Thyroid gland (tissue), 4 donors: ENCODE measurements at regions of chr6 and their contacts with region 1.

Region 1: DNA sequence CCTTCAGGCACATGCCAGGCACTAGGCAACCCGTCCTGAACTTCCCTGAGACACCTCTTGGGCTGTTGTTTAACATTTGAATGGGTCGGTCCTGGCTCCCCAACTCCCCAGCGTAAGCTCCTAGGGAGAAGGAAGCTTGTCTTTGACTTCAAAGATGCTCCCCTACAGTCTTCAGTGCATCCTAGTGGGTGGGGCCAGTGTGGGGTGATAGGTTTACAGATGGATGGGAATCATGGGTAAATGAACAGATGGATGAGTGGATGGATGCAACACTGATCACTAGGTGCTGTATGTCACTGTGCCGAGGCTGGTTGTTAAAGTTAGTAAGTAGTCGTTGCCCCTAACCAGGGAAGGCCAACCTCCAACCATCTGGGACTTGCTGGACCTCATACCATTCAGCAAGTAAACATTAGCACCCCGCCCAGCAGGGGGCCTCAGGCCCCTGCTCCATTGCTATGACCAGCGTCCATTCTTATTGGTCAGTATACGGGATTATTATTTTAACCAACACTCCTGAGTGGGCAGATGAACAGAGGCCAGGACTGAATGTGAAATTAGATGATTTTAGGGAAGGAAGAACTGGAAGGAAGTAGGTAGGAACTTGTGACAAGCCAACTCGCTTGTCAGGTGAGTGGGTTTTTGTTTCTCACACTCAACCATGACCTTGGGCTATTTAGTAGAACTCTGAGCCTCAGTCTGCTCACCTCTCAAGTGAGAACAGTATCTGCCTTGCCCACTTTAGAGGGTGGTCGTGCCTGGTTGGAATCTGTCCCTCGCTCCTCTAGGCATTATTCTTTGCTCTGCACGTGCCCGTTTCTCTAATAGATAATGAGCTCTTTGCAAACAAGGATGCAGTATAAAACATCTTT is 82.9 kb upstream of the FOXP4 start:
- DNase-seq: peak; percentile 92
- H3K4me3 ChIP-seq: no peak overlapping the region
- H3K27ac ChIP-seq: no peak overlapping the region
- H3K4me1 ChIP-seq: peaks cover 0 to 4% of the 10 kb centered on the region in 2 donors
- H3K27me3 ChIP-seq: no peaks in the 10 kb centered on the region
- CTCF ChIP-seq: peak; percentile 41 to 90 (median 80)
- POLR2A ChIP-seq: peak in 1 of 2 donors; percentile 19

Region 2: DNA sequence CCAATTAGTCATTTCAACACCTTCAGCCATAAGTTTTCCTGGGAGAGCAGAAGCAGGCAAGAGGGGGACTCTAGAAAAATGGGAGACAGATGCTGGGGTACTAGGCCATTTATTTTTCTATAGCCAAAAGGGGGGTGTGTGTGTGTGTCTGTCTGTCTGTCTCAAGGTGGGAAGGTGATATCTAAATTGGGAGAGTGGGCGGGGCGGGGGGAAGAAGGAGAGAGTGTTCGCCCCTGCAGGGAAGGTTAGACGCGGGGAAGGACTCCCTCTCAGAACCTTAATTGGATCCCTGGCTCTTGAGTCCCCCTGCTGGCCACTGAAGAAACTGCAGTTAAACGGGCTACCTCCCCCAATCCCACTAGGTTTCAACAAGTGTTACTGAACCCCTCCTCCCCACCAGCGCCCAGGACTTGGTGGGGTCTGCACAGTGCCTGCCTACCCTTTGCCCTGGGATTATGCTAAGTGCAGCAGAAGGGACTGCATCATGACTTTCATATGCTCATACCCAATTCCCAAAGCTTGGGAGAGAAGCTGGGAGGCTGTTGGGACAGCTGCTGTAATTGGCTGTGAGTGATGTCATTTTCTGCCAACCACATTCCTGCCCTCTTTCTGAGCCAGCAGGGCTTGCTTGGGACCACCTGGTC is 128.7 kb after region 1 on chr6:
- intact Hi-C with region 1: loop called (anchors 2 kb)
- DNase-seq: peak; percentile 71 to 74
- H3K4me3 ChIP-seq: no peak overlapping the region
- H3K27ac ChIP-seq: no peak overlapping the region
- H3K4me1 ChIP-seq: no peaks in the 10 kb centered on the region
- H3K27me3 ChIP-seq: no peaks in the 10 kb centered on the region
- CTCF ChIP-seq: peak; percentile 85 to 96 (median 92)
- POLR2A ChIP-seq: no peak

Region 3: GRCh38 chr6:41602864-41603608 is 139.7 kb after region 1 on chr6:
- intact Hi-C with region 1: no loop called
- DNase-seq: peak; percentile 77 to 85
- H3K4me3 ChIP-seq: no peak overlapping the region
- H3K27ac ChIP-seq: no peak overlapping the region
- H3K4me1 ChIP-seq: peaks cover 0 to 11% of the 10 kb centered on the region in 2 donors
- H3K27me3 ChIP-seq: no peaks in the 10 kb centered on the region
- CTCF ChIP-seq: peak; percentile 54 to 90 (median 82)
- POLR2A ChIP-seq: no peak

Region 4: DNA sequence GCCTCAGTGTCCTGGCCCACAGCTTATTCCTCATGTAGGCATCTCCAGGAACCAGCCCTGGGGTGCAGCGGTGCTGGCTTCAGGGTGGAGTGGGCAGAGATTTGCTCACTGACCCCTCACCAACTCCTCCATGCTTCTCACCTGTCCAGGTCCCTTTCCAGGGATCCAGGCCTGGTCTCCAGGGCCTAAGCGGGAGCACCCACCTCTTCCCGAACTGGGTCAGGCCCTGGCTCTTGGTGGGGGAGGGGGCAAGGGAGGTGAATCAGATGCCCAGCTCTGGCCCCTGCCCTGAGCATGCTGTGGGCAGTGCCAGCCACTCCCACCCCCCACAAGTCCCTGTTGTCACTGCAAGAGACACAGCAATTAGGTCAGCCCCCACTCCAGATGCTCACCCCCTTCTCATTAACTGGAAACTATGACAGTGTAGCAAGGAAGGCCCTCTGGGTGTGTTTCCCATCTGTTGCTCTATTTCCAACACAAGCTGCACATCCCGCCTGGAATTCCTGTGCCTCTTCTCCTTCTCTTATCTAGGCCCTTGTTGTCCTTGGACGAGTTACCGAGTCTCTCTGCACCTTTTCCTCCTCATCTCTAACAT is 212.0 kb after region 1 on chr6:
- intact Hi-C with region 1: loop called (anchors 5 kb)
- DNase-seq: no peak
- H3K4me3 ChIP-seq: no peak overlapping the region
- H3K27ac ChIP-seq: no peak overlapping the region
- H3K4me1 ChIP-seq: no peaks in the 10 kb centered on the region
- H3K27me3 ChIP-seq: no peaks in the 10 kb centered on the region
- CTCF ChIP-seq: no peak
- POLR2A ChIP-seq: no peak